Gastrocnemius medialis (tissue), 4 donors: ENCODE measurements at regions of chr6 and their contacts with region 1.

Region 1: GRCh38 chr6:36131511-36132245 is 1.4 kb downstream of the MAPK13 start:
- DNase-seq: peak in 1 of 2 donors; percentile 12
- ATAC-seq: no peak
- H3K4me3 ChIP-seq: peak overlapping the region in 3 of 4 donors; percentile 38 to 44 (median 41)
- H3K27ac ChIP-seq: no peak overlapping the region
- H3K4me1 ChIP-seq: peaks cover 5% of the 10 kb centered on the region in 2 donors
- H3K27me3 ChIP-seq: peaks cover 10 to 23% (median 12%) of the 10 kb centered on the region in 3 donors
- CTCF ChIP-seq: no peak
- POLR2A ChIP-seq: no peak

Region 2: DNA sequence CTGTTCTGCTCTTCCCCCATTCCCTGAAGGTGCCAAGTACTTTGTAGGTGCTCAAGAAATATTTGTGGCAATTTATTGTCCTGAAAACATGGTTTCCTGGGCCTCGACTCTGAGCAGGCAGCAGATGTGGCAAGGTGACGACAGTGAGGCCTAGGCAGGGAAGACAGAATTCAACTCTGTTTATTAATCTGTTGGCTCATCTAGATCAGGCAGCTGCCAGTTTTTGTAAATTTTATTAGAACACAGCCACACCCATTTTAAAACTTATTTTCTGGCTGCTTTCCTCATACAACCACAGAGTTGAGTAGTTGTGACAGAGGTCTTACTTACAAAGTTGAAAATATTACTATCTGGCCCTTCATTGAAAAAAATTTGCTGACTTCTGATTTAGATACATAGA is 79.6 kb before region 1 on chr6:
- in situ Hi-C with region 1: no loop called
- intact Hi-C with region 1: no loop called
- DNase-seq: peak in 1 of 2 donors; percentile 49
- ATAC-seq: peak; percentile 79 to 81
- H3K4me3 ChIP-seq: no peak overlapping the region
- H3K27ac ChIP-seq: peak overlapping the region; percentile 1 to 52 (median 32)
- H3K4me1 ChIP-seq: peaks cover 19 to 32% of the 10 kb centered on the region in 2 donors
- H3K27me3 ChIP-seq: no peaks in the 10 kb centered on the region
- CTCF ChIP-seq: no peak
- POLR2A ChIP-seq: no peak

Region 3: DNA sequence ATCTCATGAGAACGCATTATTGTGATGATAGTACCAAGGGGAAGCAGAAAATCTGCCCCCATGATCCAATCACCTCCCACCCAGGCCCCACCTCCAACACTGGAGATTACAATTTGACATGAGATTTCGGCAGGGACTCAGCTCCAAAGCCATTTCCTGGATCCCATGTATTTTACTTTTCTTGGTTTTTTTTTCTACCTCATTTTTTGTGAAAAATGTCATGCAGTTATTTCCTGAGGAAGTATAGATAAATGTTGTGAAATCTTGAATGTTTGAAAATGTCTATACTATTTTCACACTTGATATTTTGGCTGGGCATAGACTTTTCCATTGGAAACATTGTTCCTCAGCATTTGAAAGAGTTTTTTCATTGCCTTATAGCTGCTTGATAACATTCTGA is 55.8 kb after region 1 on chr6:
- in situ Hi-C with region 1: loop called in 3 of 4 experiments (anchors 5 to 10 kb)
- intact Hi-C with region 1: no loop called
- DNase-seq: no peak
- ATAC-seq: no peak
- H3K4me3 ChIP-seq: no peak overlapping the region
- H3K27ac ChIP-seq: no peak overlapping the region
- H3K4me1 ChIP-seq: no peaks in the 10 kb centered on the region
- H3K27me3 ChIP-seq: no peaks in the 10 kb centered on the region
- CTCF ChIP-seq: no peak
- POLR2A ChIP-seq: no peak

Region 4: GRCh38 chr6:36526066-36526465 is 394.4 kb after region 1 on chr6:
- in situ Hi-C with region 1: no loop called
- intact Hi-C with region 1: no loop called
- DNase-seq: no peak
- ATAC-seq: no peak
- H3K4me3 ChIP-seq: no peak overlapping the region
- H3K27ac ChIP-seq: no peak overlapping the region
- H3K4me1 ChIP-seq: peaks cover 10 to 13% of the 10 kb centered on the region in 2 donors
- H3K27me3 ChIP-seq: no peaks in the 10 kb centered on the region
- CTCF ChIP-seq: no peak
- POLR2A ChIP-seq: no peak